AG04450 (cell line): ENCODE measurements at regions of chr17 and their contacts with region 1.

Region 1: GRCh38 chr17:48954300-48954755 is 9.7 kb upstream of the SNF8 start:
- DNase-seq: no peak
- H3K4me3 ChIP-seq: no peak overlapping the region
- H3K27ac ChIP-seq: no peak overlapping the region
- H3K27me3 ChIP-seq: no peaks in the 10 kb centered on the region
- CTCF ChIP-seq: peak; percentile 67

Region 2: GRCh38 chr17:48970224-48970623 is 15.9 kb after region 1 on chr17:
- CTCF ChIA-PET with region 1: interaction called, 4 read pairs
- POLR2A ChIA-PET with region 1: interaction called, 11 read pairs
- DNase-seq: no peak
- H3K4me3 ChIP-seq: no peak overlapping the region
- H3K27ac ChIP-seq: no peak overlapping the region
- H3K27me3 ChIP-seq: no peaks in the 10 kb centered on the region
- CTCF ChIP-seq: no peak

Region 3: GRCh38 chr17:49223517-49224197 is 269.3 kb after region 1 on chr17:
- CTCF ChIA-PET with region 1: no interaction called
- POLR2A ChIA-PET with region 1: no interaction called
- DNase-seq: no peak
- H3K4me3 ChIP-seq: no peak overlapping the region
- H3K27ac ChIP-seq: no peak overlapping the region
- H3K27me3 ChIP-seq: peaks cover 53% of the 10 kb centered on the region
- CTCF ChIP-seq: peak; percentile 86